Activated naive CD4-positive, alpha-beta T cell treated with anti-CD3 and anti-CD28 coated beads, Interleukin-2, amount 10 ng/mL, durations not matched to agents 7 days and 5 days (primary cell): ENCODE measurements at regions of chrX and their contacts with region 1.

Region 1: GRCh38 chrX:15107367-15107988 is 162.4 kb downstream of the ASB9 start:
- DNase-seq: peak; percentile 21
- H3K4me3 Mint-ChIP-seq: no peak overlapping the region
- H3K27ac Mint-ChIP-seq: no peak overlapping the region
- H3K4me1 Mint-ChIP-seq: peaks cover 17% of the 10 kb centered on the region
- H3K27me3 Mint-ChIP-seq: peaks cover 9% of the 10 kb centered on the region

Region 2: GRCh38 chrX:15143050-15143824 is 35.8 kb after region 1 on chrX:
- CTCF ChIA-PET with region 1: interaction called, 27 read pairs
- DNase-seq: peak; percentile 69
- H3K4me3 Mint-ChIP-seq: no peak overlapping the region
- H3K27ac Mint-ChIP-seq: peak overlapping the region; percentile 89
- H3K4me1 Mint-ChIP-seq: peaks cover 22% of the 10 kb centered on the region
- H3K27me3 Mint-ChIP-seq: no peaks in the 10 kb centered on the region

Region 3: DNA sequence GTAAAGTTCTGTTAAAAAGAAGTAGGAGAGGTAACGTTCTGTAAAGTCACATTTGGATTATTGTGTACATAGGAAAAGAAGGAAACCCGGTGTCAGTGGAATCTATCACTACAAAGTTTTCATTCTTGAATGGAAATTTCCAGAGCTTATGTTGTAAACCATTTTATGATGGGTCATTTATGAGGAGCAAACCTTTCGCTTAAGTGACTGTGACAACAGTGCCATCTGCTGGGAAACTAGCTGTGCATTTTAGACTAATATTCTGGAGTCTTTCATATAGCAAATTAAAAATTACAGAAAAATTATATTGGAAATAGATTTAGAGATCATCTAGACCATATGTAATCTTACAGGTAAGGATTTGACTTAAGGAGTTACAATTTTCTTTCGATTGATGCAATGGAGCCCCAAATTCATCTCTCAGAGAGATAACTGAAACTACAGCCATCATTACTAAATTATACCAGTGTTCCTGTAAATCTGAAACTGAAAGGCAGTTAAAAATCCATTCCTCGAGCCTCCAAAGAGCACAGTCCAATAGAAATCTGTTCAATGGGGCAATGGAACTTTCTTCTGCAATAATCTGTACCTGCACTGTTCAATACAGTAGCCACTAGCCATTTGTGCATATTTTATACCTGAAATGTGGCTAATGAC is 135.5 kb after region 1 on chrX:
- CTCF ChIA-PET with region 1: interaction called, 21 read pairs
- DNase-seq: peak; percentile 61
- H3K4me3 Mint-ChIP-seq: no peak overlapping the region
- H3K27ac Mint-ChIP-seq: no peak overlapping the region
- H3K4me1 Mint-ChIP-seq: peaks cover 2% of the 10 kb centered on the region
- H3K27me3 Mint-ChIP-seq: no peaks in the 10 kb centered on the region